GM10248 (cell line): ENCODE measurements at regions of chr7 and their contacts with region 1.

Region 1: GRCh38 chr7:130941322-130942210 is 207.6 kb upstream of the KLF14 start:
- DNase-seq: no peak
- CTCF ChIP-seq: no peak

Region 2: GRCh38 chr7:130831817-130832481 is 109.6 kb before region 1 on chr7:
- CTCF ChIA-PET with region 1: no interaction called
- POLR2A ChIA-PET with region 1: no interaction called
- DNase-seq: peak; percentile 60
- CTCF ChIP-seq: peak; percentile 72

Region 3: DNA sequence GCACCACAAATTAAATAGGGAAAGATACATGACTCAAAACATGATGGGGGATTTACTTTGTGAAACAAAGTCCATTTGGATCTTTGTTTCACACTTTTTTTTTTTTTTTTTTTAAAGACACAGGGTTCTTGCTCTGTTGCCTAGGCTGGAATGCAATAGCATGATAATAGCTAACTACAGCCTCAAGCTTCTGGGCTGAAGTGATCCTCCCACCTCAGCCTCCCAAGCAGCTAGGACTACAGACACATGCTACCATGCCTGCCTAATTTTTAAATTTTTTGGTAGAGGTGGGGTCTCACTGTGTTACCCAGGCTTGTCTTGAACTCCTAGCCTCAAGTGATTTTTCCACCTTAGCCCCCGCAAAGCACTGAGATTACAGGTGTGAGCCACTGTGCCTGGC is 35.0 kb before region 1 on chr7:
- CTCF ChIA-PET with region 1: no interaction called
- POLR2A ChIA-PET with region 1: no interaction called
- DNase-seq: no peak
- CTCF ChIP-seq: no peak

Region 4: DNA sequence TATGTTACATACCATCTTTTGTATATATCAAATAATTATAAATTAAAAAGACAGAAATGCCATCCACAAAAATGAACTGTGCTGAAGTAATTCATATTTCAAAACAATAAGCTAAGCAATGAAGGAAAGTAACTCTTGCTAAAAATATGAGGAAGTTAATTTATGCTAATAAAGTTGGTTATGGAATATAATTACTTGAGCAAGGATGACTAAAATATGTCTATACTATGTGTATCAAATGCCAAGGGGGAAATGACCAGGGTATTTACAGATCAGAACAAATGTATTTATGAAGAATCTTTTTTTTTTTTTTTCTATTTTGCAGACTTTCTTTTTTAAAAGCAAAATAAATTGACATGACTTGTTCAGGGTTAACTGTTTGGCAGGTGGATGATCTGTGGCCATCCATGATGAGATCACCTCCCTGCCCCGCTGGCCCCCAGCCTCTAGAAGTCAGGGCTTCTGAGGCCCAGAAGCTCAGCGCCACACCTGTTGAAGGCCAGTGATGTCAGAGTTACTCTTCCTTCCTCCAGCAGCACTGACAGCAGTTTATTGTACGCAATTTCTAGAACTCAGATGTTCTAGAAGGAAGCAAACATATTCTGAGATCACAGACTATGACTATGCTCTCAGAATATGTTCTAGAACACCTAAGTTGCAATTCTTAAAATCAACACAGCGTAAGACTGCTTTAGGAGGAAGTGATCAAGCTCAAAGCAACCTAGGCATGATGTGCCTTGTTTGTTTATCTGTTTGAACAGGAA is 11.5 kb before region 1 on chr7:
- CTCF ChIA-PET with region 1: interaction called, 26 read pairs
- POLR2A ChIA-PET with region 1: interaction called, 4 read pairs
- DNase-seq: no peak
- CTCF ChIP-seq: no peak

Region 5: GRCh38 chr7:131157530-131158243 is 216.1 kb after region 1 on chr7:
- CTCF ChIA-PET with region 1: no interaction called
- POLR2A ChIA-PET with region 1: no interaction called
- DNase-seq: no peak
- CTCF ChIP-seq: no peak

Region 6: GRCh38 chr7:131272086-131272485 is 330.5 kb after region 1 on chr7:
- CTCF ChIA-PET with region 1: no interaction called
- POLR2A ChIA-PET with region 1: no interaction called
- DNase-seq: no peak
- CTCF ChIP-seq: no peak